CD14-positive monocyte (primary cell): ENCODE measurements at regions of chr5 and their contacts with region 1.

Region 1: DNA sequence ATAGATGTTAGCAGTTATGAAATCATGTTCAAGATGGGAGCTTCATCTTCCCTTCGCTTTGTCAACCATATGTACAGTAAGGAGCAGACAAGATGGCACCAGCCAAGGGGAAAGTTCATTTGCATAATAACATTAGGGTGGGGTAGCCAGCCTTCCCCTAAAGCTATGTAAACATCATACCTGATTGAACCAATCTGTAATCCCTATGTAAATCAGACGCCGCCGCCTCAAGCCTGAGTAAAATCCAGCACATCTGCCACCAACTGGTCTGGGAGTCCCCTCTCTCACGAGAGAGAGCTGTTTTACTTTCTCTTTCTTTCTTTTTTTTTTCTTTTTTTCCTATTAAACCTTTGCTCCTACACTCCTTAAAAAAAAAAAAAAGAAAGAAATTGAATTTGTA is 30.8 kb upstream of the REEP2 start:
- DNase-seq: no peak
- H3K4me3 ChIP-seq: no peak overlapping the region
- H3K4me3 Mint-ChIP-seq: no peak overlapping the region
- H3K27ac ChIP-seq: no peak overlapping the region
- H3K27ac Mint-ChIP-seq: peak overlapping the region in 2 of 7 donors; percentile 14 to 53
- H3K4me1 ChIP-seq: no peaks in the 10 kb centered on the region
- H3K4me1 Mint-ChIP-seq: no peaks in the 10 kb centered on the region
- H3K27me3 ChIP-seq: no peaks in the 10 kb centered on the region
- H3K27me3 Mint-ChIP-seq: peaks cover 0 to 2% (median 0%) of the 10 kb centered on the region in 3 donors
- CTCF ChIP-seq: no peak

Region 2: GRCh38 chr5:138054847-138055558 is 353.0 kb before region 1 on chr5:
- intact Hi-C with region 1: no loop called
- DNase-seq: no peak
- H3K4me3 ChIP-seq: no peak overlapping the region
- H3K4me3 Mint-ChIP-seq: peak overlapping the region in 1 of 2 donors; percentile 48
- H3K27ac ChIP-seq: no peak overlapping the region
- H3K27ac Mint-ChIP-seq: no peak overlapping the region
- H3K4me1 ChIP-seq: no peaks in the 10 kb centered on the region
- H3K4me1 Mint-ChIP-seq: peaks cover 2% of the 10 kb centered on the region
- H3K27me3 ChIP-seq: peaks cover 2 to 4% of the 10 kb centered on the region in 2 donors
- H3K27me3 Mint-ChIP-seq: peaks cover 3 to 26% (median 9%) of the 10 kb centered on the region in 3 donors
- CTCF ChIP-seq: no peak

Region 3: DNA sequence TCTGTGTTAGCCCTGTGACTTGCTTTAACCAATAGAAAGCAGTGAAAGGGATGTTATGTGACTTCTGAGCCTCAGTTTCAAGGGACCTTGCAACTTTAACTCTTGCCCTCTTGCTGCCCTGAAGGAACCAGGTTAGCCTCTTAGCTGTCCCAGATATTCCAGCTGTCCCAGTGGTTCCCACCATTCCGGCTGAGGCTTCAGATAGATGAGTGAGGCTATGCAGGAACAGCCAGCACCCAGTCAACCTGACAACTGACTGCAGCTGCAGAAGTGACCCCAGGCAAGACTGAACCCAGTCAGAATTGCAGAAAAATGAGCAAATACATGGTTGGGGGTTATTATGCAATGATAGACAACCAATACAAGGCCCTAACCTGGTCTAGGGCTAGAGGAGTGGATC is 184.5 kb before region 1 on chr5:
- intact Hi-C with region 1: loop called in 1 of 2 experiments (anchors 5 kb)
- DNase-seq: no peak
- H3K4me3 ChIP-seq: no peak overlapping the region
- H3K4me3 Mint-ChIP-seq: no peak overlapping the region
- H3K27ac ChIP-seq: no peak overlapping the region
- H3K27ac Mint-ChIP-seq: no peak overlapping the region
- H3K4me1 ChIP-seq: peaks cover 6 to 8% of the 10 kb centered on the region in 2 donors
- H3K4me1 Mint-ChIP-seq: peaks cover 6% of the 10 kb centered on the region
- H3K27me3 ChIP-seq: peaks cover 0 to 3% of the 10 kb centered on the region in 2 donors
- H3K27me3 Mint-ChIP-seq: peaks cover 0 to 19% (median 11%) of the 10 kb centered on the region in 3 donors
- CTCF ChIP-seq: no peak

Region 4: DNA sequence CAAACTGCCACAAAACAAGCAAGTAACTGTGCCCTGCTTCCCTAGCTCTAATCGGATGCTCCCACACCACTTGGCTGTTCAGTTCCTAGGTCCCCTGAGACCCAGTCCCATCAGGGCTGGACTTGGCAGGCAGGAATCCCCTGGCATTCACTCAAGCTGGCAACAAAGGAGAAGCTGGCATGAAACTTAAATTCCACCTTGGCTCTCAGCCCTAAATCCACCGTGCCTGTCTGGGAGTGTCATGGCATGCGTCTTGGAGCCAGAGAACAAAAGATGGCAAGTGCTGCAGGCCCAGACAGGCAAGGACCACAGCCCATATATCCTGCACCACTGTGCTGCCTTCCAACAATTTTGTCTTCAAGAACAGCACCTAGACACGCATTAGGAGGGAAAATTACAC is 96.8 kb after region 1 on chr5:
- intact Hi-C with region 1: no loop called
- DNase-seq: no peak
- H3K4me3 ChIP-seq: no peak overlapping the region
- H3K4me3 Mint-ChIP-seq: no peak overlapping the region
- H3K27ac ChIP-seq: no peak overlapping the region
- H3K27ac Mint-ChIP-seq: peak overlapping the region in 3 of 7 donors; percentile 2 to 26 (median 23)
- H3K4me1 ChIP-seq: peaks cover 3 to 7% of the 10 kb centered on the region in 2 donors
- H3K4me1 Mint-ChIP-seq: peaks cover 14% of the 10 kb centered on the region
- H3K27me3 ChIP-seq: no peaks in the 10 kb centered on the region
- H3K27me3 Mint-ChIP-seq: peaks cover 0 to 4% (median 0%) of the 10 kb centered on the region in 3 donors
- CTCF ChIP-seq: no peak